ENCODE measurements at regions of chr2 and their contacts with region 1.

Region 1: DNA sequence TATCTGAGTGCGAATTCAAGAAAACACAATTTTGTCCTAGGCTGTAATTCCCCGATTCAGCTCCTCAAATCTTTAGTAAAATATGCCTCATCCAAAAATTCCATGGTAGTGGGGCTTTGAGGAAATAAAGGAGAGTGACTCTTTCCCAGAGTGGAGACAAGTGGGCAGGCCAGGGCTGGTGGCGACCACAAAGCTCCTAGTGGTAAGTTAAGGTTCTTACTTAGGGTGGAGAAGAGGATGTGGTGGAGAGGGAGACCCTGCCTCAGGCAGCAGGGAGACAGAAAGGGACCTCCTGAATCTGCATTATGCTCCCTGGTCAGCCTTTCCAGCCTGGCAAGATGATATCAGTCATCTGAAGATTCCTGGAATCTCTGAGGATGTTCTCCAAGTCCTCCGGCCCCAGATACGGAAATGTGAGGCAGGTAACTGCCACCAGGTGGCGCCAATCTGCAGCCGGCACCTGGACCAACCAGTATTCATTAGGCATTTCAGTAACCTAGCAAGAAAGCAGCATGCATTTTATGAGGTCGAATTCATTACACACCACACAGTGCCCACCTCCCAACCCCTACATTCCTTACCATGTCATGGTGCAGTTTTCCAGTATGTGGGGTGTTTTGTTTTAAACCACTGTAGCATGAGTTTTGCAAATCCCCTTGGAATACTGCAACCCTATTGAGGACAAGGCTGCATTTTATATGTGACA is 106.4 kb downstream of the POLE4 start:
- DNase-seq: peak; percentile 29
- H3K4me3 Mint-ChIP-seq: no peak overlapping the region
- H3K27ac Mint-ChIP-seq: no peak overlapping the region
- H3K4me1 Mint-ChIP-seq: peaks cover 2% of the 10 kb centered on the region
- H3K27me3 Mint-ChIP-seq: peaks cover 8% of the 10 kb centered on the region

Region 2: DNA sequence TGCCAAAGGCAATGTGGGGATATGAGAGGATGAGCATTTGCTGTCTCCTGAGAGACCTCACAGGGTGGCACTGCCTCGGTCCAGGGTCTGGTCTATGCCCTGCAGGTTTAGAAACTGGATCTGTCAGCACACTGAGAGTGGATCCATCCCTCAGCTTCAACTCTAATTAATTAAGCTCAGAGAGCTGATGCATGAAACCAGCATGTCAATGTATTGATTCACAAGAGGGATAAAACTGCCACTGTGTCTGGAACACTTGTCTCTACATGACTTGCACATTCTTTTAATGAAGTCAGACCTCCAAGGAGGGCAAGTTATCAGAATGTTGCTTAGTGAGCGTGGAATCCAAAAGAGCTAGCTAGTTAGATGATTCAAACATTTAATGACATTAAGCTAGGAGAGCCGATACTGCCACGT is 128.9 kb before region 1 on chr2:
- intact Hi-C with region 1: loop called (anchors 10 kb)
- DNase-seq: no peak
- H3K4me3 Mint-ChIP-seq: no peak overlapping the region
- H3K27ac Mint-ChIP-seq: no peak overlapping the region
- H3K4me1 Mint-ChIP-seq: no peaks in the 10 kb centered on the region
- H3K27me3 Mint-ChIP-seq: peaks cover 16% of the 10 kb centered on the region

Region 3: GRCh38 chr2:75002007-75002406 is 62.8 kb before region 1 on chr2:
- intact Hi-C with region 1: no loop called
- DNase-seq: no peak
- H3K4me3 Mint-ChIP-seq: no peak overlapping the region
- H3K27ac Mint-ChIP-seq: no peak overlapping the region
- H3K4me1 Mint-ChIP-seq: no peaks in the 10 kb centered on the region
- H3K27me3 Mint-ChIP-seq: no peaks in the 10 kb centered on the region

Region 4: DNA sequence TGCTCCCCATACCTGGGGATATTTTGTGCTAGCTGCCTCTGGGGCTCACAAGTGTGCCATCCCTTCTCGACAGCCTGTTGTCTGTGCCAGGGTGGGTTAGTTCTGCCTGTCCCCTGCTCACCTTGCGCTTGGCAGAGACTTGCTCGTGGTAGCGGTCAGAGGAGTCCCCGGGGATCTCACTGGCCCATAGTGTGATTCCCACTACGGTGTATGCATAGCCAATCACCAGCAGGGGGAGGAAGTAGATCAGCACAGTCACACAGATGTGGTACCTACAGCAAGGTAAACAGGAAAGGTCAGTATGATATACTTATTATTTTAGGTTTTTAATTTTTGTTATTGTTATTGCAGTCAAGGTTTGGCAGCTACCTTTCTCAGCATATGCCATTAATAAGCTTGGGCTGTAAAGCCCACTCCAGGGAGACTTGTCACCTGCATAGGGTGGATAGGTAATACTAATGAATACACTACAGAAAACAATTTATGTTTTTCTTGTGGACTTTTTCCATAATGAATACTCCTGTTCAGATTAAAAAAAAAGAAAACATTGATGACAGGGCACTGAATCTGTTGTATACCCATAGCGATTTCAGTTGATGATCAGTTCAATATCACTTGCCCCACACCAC is 11.2 kb before region 1 on chr2:
- intact Hi-C with region 1: no loop called
- DNase-seq: no peak
- H3K4me3 Mint-ChIP-seq: no peak overlapping the region
- H3K27ac Mint-ChIP-seq: no peak overlapping the region
- H3K4me1 Mint-ChIP-seq: peaks cover 5% of the 10 kb centered on the region
- H3K27me3 Mint-ChIP-seq: peaks cover 8% of the 10 kb centered on the region